ENCODE measurements at regions of chr15 and their contacts with region 1.

Region 1: GRCh38 chr15:50003786-50004334 is 115.2 kb downstream of the ATP8B4 start:
- DNase-seq: peak; percentile 85 to 89
- H3K4me3 ChIP-seq: no peak overlapping the region
- H3K27ac ChIP-seq: no peak overlapping the region
- H3K4me1 ChIP-seq: peaks cover 0 to 7% (median 5%) of the 10 kb centered on the region in 4 donors
- H3K27me3 ChIP-seq: no peaks in the 10 kb centered on the region
- CTCF ChIP-seq: peak; percentile 68 to 80

Region 2: DNA sequence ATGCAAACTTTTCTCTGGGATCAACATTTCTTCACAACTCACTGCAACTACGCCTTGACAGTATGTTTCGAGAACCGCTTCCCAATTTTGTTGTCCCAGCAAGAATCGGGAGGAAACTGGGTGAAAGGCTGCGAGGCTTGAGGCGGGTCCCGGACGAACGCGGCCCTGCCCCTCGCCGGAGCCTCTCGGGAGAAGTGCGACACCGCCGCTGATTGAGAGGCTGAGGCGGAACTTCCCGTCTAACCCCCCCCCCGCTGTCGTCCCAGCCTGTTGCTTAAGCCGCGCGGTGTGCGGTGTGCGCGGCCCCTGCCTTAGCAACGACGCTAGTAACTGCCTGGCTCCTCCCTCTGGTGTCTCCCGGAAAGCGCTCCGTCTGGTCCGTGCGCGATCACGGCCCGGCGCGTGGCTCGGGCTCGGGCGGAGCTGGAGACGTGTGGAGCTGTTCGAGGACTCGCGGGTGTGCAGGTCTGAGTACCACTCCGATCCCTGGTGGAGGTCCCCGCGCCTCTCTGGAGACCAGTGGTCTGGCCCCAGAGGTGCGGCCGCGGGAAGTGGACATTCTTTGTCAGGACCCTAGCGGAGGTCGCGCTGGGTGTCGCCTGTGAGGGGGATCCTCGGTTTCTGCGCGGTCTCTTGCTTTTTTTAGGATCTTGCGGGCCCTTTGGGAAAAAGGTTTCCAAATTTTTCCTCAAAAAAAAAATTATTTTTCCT is 383.0 kb before region 1 on chr15 and contains the starts of genes DTWD1 and FAM227B:
- intact Hi-C with region 1: loop called (anchors 5 kb)
- DNase-seq: peak; percentile 96 to 99
- H3K4me3 ChIP-seq: peak within 1 kb of the TSS; percentile 73 to 89
- H3K27ac ChIP-seq: peak within 1 kb of the TSS; percentile 91 to 93
- H3K4me1 ChIP-seq: peaks cover 0 to 36% (median 18%) of the 10 kb centered on the region in 4 donors
- H3K27me3 ChIP-seq: no peaks in the 10 kb centered on the region
- CTCF ChIP-seq: no peak

Region 3: GRCh38 chr15:49678655-49679054 is 325.2 kb before region 1 on chr15:
- intact Hi-C with region 1: no loop called
- DNase-seq: no peak
- H3K4me3 ChIP-seq: no peak overlapping the region
- H3K27ac ChIP-seq: peak overlapping the region; percentile 10 to 25
- H3K4me1 ChIP-seq: peaks cover 0 to 30% (median 0%) of the 10 kb centered on the region in 4 donors
- H3K27me3 ChIP-seq: no peaks in the 10 kb centered on the region
- CTCF ChIP-seq: no peak

Measured in tibial artery (tissue), 4 donors.